ENCODE measurements at regions of chr17 and their contacts with region 1.

Region 1: GRCh38 chr17:65100316-65101140 is 36.6 kb upstream of the RGS9 start:
- DNase-seq: peak; percentile 82
- ATAC-seq: peak; percentile 84
- H3K4me3 Mint-ChIP-seq: peak overlapping the region; percentile 85
- H3K27ac Mint-ChIP-seq: peak overlapping the region; percentile 98
- H3K4me1 Mint-ChIP-seq: peaks cover 23% of the 10 kb centered on the region
- H3K27me3 Mint-ChIP-seq: peaks cover 5% of the 10 kb centered on the region
- CTCF ChIP-seq: no peak

Region 2: DNA sequence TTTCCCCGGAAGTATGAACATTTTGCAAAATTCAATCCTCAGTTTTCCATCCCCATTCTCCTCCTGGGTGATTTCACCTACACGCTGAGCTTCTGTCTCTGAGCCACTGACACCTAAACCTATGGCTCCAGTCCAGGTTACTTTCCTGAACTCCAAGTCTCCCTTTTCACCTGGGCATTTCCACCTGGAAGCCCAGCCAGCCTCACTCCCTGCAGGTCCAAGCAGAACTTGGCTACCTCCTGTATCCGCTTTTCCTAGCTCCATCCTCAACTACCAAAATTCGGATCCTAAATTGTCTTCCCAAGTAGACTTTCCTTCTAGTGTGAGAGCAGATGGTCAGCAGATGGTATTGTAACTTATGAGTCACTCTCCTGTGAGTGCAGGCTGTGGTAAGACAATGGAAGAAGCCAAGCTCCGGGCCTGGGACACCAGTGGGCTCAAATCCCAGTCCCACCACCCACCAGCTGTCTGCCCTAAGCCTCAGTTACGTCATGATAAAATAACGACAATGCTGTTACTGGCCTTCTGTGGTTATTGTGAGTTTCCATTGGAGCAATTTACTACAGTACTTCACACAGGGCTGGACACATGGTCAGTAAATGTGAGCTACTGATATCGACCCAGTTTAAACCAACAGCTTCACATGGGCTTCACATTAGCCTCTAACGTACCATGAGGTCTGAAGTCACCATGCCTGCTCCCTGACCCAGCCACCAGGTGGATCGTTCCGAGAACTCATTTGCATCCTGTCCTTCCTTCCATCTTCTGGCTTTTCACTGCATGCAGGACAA is 743.1 kb before region 1 on chr17:
- CTCF ChIA-PET with region 1: no interaction called
- POLR2A ChIA-PET with region 1: no interaction called
- intact Hi-C with region 1: no loop called
- DNase-seq: no peak
- ATAC-seq: no peak
- H3K4me3 Mint-ChIP-seq: no peak overlapping the region
- H3K27ac Mint-ChIP-seq: no peak overlapping the region
- H3K4me1 Mint-ChIP-seq: no peaks in the 10 kb centered on the region
- H3K27me3 Mint-ChIP-seq: no peaks in the 10 kb centered on the region
- CTCF ChIP-seq: no peak

Region 3: DNA sequence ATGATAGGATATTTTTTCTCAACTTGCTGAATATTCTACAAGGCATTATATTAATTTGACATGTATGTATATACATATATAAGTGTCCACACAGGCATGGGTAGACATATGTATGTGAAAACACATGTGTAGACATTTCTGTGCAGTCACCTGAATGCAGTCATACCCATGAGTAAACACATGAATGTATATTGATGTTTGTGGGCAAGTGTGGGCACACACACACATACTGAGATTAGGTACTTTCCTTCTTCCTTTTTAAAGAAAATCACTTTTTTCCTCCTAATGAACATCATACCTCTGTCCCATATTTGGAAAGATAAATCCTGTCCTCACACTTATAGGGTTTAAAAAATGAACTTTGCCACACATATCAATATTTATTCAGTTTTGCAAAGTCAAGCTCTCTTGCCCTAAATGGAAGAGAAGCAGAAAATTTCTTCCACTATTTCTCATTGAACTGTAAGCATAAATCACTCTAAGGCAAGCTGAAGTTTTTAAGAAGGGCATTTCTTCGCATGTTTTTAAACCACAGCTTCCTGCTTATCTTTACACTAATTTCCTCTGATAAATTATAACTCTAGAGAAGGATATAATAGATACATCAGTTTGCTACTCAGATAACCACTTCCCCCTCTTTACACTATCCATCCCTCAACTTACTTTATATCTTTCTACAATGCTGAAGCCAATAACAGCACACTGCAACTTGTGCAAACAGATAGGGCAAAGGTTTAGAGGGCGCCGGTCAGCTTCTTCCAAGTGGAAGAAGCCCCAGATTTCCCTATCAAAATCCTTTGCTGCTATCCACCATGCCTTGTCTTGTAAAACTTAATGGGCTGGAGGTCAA is 131.7 kb before region 1 on chr17:
- CTCF ChIA-PET with region 1: interaction called, 17 read pairs
- POLR2A ChIA-PET with region 1: interaction called, 49 read pairs
- intact Hi-C with region 1: loop called (anchors 1 kb)
- DNase-seq: no peak
- ATAC-seq: no peak
- H3K4me3 Mint-ChIP-seq: peak overlapping the region; percentile 38
- H3K27ac Mint-ChIP-seq: peak overlapping the region; percentile 76
- H3K4me1 Mint-ChIP-seq: peaks cover 85% of the 10 kb centered on the region
- H3K27me3 Mint-ChIP-seq: no peaks in the 10 kb centered on the region
- CTCF ChIP-seq: no peak

Region 4: GRCh38 chr17:64984851-64985521 is 115.5 kb before region 1 on chr17:
- CTCF ChIA-PET with region 1: interaction called, 6 read pairs
- POLR2A ChIA-PET with region 1: interaction called, 32 read pairs
- intact Hi-C with region 1: loop called (anchors 1 kb)
- DNase-seq: no peak
- ATAC-seq: no peak
- H3K4me3 Mint-ChIP-seq: peak overlapping the region; percentile 81
- H3K27ac Mint-ChIP-seq: peak overlapping the region; percentile 99
- H3K4me1 Mint-ChIP-seq: peaks cover 64% of the 10 kb centered on the region
- H3K27me3 Mint-ChIP-seq: no peaks in the 10 kb centered on the region
- CTCF ChIP-seq: no peak

Region 5: GRCh38 chr17:65001409-65002102 is 99.0 kb before region 1 on chr17:
- CTCF ChIA-PET with region 1: no interaction called
- POLR2A ChIA-PET with region 1: no interaction called
- intact Hi-C with region 1: no loop called
- DNase-seq: no peak
- ATAC-seq: no peak
- H3K4me3 Mint-ChIP-seq: no peak overlapping the region
- H3K27ac Mint-ChIP-seq: no peak overlapping the region
- H3K4me1 Mint-ChIP-seq: peaks cover 42% of the 10 kb centered on the region
- H3K27me3 Mint-ChIP-seq: no peaks in the 10 kb centered on the region
- CTCF ChIP-seq: no peak

Region 6: DNA sequence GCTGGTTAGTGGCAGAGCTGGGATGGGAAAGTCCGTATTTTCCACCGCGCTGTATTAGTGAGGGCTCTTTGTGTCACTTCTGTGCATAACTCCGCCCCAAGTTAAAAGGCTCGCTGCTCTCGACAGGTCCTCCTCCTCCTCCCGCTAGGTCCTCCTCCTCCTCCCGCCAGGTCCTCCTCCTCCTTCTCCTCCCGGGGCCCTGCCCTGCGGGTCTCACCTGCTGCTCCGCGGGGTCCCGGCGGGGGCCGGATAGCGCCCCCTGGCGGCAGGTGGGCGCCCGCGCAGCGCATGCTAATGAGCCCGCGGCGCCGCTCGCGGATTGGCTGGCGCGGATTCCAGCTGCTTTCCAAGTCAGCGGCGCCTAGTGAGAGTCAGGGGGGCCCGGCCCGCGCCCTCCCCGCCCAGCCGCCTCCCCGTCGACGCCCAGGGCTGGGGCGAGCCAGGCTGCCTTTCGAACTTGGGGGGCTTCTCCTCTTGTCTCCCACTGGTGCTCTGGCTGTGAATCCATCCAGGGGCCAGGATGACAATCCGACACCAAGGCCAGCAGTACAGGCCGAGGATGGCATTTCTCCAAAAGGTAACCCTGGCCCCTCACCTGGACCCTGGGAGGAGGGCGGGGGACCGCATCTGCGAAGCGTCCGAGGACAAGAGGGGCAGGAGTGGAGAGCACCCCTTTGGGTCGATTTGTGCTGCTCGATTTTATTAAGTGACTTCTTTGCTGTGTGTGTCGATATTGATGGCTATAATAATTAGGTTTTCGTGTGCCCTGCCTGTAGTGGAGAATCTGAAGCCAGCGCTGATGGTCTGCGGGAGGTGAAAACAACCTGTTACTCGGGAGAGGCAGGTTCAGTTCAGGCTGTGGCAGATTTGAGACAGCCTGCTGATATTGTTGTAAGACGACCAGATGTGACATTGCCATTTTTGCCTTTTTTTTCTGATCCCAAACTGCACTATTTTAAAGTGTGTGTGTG is 36.8 kb after region 1 on chr17 and contains the start of gene RGS9:
- CTCF ChIA-PET with region 1: interaction called, 9 read pairs
- POLR2A ChIA-PET with region 1: interaction called, 3 read pairs
- intact Hi-C with region 1: loop called (anchors 1 kb)
- DNase-seq: peak; percentile 84
- ATAC-seq: peak; percentile 91
- H3K4me3 Mint-ChIP-seq: peak within 1 kb of the TSS; percentile 81
- H3K27ac Mint-ChIP-seq: peak within 1 kb of the TSS; percentile 65
- H3K4me1 Mint-ChIP-seq: peaks cover 20% of the 10 kb centered on the region
- H3K27me3 Mint-ChIP-seq: peaks cover 9% of the 10 kb centered on the region
- CTCF ChIP-seq: no peak
- total RNA-seq, gene RGS9: 3.2 TPM in 2 replicates

Region 7: DNA sequence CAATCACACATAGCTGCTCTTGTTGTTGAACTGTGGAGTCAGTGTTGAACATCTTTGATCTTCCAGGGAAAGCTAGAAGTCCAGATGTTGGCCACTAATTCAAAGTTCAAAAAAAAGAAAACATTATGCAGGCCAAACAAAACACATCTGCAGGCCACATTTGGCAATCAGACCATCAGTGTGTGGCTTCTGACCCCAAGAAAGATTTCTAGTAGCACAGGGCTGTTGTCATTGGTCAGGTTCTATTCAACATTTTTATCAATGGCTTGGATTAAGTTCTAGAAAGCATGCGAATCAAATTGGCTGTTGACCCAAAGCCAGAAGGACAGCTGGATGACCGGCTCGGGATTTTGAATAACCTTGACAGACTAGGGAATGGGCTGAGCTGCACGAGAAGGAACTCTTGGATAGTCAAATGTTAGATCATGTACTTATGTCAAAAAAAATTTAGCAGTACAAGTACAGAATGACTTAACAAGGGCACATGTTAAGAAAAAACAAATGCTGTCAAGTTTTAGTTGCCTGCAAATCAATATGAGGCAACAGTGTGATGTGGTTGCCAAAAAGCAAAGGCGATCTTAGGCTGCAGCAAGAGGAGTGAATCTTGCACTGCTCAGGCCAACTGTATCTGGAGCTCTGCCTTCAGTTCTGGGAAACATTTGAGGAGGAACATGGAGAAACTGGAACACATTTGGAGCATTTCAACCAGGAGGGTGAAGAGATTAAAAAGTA is 224.2 kb after region 1 on chr17:
- CTCF ChIA-PET with region 1: no interaction called
- POLR2A ChIA-PET with region 1: no interaction called
- intact Hi-C with region 1: no loop called
- DNase-seq: no peak
- ATAC-seq: no peak
- H3K4me3 Mint-ChIP-seq: no peak overlapping the region
- H3K27ac Mint-ChIP-seq: no peak overlapping the region
- H3K4me1 Mint-ChIP-seq: no peaks in the 10 kb centered on the region
- H3K27me3 Mint-ChIP-seq: no peaks in the 10 kb centered on the region
- CTCF ChIP-seq: no peak